CD4-positive, alpha-beta T cell (primary cell): ENCODE measurements at regions of chr6 and their contacts with region 1.

Region 1: DNA sequence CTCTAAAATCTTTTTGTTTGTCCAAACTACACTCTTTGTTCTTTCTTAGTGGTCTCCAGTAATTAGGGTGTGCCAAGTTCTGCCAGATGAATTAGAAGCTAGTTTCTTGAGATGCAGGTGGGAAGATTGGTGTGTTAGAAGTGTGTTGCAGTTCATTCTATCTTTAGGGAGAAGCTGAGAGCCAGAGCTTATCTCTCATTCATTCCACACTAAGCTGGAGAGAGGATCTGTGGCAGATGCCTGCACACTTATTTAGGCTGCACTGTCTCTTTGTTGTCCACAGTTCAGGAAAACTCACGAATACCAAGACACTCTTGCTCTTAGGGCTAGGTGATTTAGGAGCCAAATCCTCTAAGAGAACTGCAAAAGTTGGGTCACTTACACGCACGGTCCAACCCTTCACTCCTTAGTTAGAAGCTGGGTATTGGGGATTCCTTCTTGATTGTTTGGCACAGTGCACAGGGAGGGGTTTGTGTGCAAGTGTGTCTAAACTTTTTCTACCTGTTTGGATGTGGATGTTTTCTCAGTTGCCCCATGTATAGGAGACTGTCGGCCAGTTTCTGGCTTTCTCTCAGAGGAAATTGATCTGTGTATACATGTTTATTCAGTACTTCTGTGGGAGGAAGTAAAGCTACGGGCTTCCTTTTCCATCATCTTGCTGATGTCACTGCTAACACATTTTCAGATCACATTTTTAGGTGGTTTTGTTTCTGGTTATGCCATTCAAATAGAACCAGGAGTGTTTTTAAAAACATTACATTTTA is 49.5 kb downstream of the SMAP1 start:
- DNase-seq: peak in 3 of 14 experiments; percentile 25 to 47 (median 27)
- ATAC-seq: peak; percentile 92
- H3K4me3 ChIP-seq: no peak overlapping the region
- H3K4me3 Mint-ChIP-seq: peak overlapping the region; percentile 13
- H3K27ac ChIP-seq: no peak overlapping the region
- H3K27ac Mint-ChIP-seq: peak overlapping the region; percentile 68
- H3K4me1 ChIP-seq: peaks cover 6% of the 10 kb centered on the region
- H3K4me1 Mint-ChIP-seq: peaks cover 68% of the 10 kb centered on the region
- H3K27me3 ChIP-seq: no peaks in the 10 kb centered on the region
- H3K27me3 Mint-ChIP-seq: no peaks in the 10 kb centered on the region
- CTCF ChIP-seq: no peak

Region 2: DNA sequence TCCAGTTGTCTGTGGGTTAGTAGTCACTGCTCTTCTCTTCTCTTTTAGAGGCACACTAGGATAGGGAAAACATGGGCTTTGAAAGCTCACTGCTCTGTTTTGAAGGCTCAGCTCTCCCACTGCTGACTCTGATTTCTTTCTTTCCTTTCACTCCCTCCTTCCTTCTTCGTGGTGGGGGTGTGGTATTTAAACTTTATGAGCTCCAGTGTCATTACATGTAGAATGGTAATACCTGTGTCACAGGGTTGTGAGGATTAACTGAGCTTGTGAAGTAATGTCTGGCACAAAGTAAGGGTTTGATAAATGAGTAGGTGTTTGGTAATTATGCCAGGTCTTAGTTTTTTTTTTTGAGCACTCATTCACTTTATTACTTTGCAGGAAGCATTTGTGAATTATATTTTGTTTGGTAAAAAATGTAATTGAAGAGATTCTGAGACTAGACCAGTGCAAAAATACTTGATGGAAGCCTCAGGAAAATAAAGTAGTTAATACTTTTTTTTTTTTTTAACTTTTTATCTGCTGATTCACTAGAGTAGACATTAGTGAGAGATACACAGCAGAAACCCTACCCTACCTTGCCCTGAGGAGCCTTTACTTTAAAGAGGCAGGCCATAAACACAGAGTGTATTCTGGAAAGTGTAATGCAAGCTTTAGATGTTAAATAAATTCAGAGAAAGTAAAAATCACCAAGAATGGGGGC is 32.3 kb before region 1 on chr6:
- CTCF ChIA-PET with region 1: no interaction called
- POLR2A ChIA-PET with region 1: no interaction called
- intact Hi-C with region 1: no loop called
- DNase-seq: no peak
- ATAC-seq: no peak
- H3K4me3 ChIP-seq: no peak overlapping the region
- H3K4me3 Mint-ChIP-seq: no peak overlapping the region
- H3K27ac ChIP-seq: no peak overlapping the region
- H3K27ac Mint-ChIP-seq: peak overlapping the region; percentile 16
- H3K4me1 ChIP-seq: peaks cover 8% of the 10 kb centered on the region
- H3K4me1 Mint-ChIP-seq: peaks cover 65% of the 10 kb centered on the region
- H3K27me3 ChIP-seq: no peaks in the 10 kb centered on the region
- H3K27me3 Mint-ChIP-seq: no peaks in the 10 kb centered on the region
- CTCF ChIP-seq: no peak

Region 3: GRCh38 chr6:70735513-70735912 is 18.3 kb after region 1 on chr6:
- CTCF ChIA-PET with region 1: no interaction called
- POLR2A ChIA-PET with region 1: no interaction called
- intact Hi-C with region 1: loop called in 1 of 2 experiments (anchors 2 kb)
- DNase-seq: no peak
- ATAC-seq: no peak
- H3K4me3 ChIP-seq: no peak overlapping the region
- H3K4me3 Mint-ChIP-seq: no peak overlapping the region
- H3K27ac ChIP-seq: no peak overlapping the region
- H3K27ac Mint-ChIP-seq: no peak overlapping the region
- H3K4me1 ChIP-seq: no peaks in the 10 kb centered on the region
- H3K4me1 Mint-ChIP-seq: peaks cover 34% of the 10 kb centered on the region
- H3K27me3 ChIP-seq: no peaks in the 10 kb centered on the region
- H3K27me3 Mint-ChIP-seq: no peaks in the 10 kb centered on the region
- CTCF ChIP-seq: no peak

Region 4: DNA sequence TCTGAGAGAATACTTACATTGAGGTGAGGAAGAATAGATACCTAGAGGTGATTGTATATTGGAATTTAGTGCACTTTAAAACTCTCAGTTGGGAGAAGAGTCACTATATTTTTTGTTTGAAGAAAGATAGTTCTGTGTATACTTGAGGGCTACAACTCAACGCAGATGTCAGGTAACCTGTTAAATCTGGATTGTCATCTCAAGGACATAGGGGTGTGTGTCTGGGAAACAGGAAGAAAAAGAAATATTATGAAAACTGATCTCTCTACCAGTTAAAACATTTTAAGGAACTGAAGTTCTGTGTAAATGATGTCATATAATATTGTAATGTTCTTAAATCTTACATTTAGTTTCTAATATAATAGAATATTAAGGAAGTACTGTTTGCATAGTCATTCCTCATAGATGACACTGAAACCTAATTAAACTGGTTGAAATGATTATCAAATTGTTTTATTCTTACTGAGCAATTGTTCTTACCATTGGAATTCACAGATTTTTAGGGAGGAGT is 36.7 kb after region 1 on chr6:
- CTCF ChIA-PET with region 1: no interaction called
- POLR2A ChIA-PET with region 1: no interaction called
- intact Hi-C with region 1: no loop called
- DNase-seq: no peak
- ATAC-seq: no peak
- H3K4me3 ChIP-seq: no peak overlapping the region
- H3K4me3 Mint-ChIP-seq: no peak overlapping the region
- H3K27ac ChIP-seq: no peak overlapping the region
- H3K27ac Mint-ChIP-seq: no peak overlapping the region
- H3K4me1 ChIP-seq: no peaks in the 10 kb centered on the region
- H3K4me1 Mint-ChIP-seq: peaks cover 8% of the 10 kb centered on the region
- H3K27me3 ChIP-seq: no peaks in the 10 kb centered on the region
- H3K27me3 Mint-ChIP-seq: no peaks in the 10 kb centered on the region
- CTCF ChIP-seq: no peak